Activated CD4-positive, alpha-beta T cell treated with anti-CD3 and anti-CD28 coated beads for 36 hours (primary cell): ENCODE measurements at regions of chr11 and their contacts with region 1.

Region 1: GRCh38 chr11:19712281-19713220 is at the start of gene NAV2:
- DNase-seq: peak; percentile 86
- ATAC-seq: peak; percentile 98
- H3K4me3 Mint-ChIP-seq: peak within 1 kb of the TSS; percentile 77
- H3K27ac Mint-ChIP-seq: peak within 1 kb of the TSS; percentile 85
- H3K4me1 Mint-ChIP-seq: peaks cover 26% of the 10 kb centered on the region
- H3K27me3 Mint-ChIP-seq: peaks cover 39% of the 10 kb centered on the region
- total RNA-seq, gene NAV2: 0.54 to 0.55 TPM

Region 2: DNA sequence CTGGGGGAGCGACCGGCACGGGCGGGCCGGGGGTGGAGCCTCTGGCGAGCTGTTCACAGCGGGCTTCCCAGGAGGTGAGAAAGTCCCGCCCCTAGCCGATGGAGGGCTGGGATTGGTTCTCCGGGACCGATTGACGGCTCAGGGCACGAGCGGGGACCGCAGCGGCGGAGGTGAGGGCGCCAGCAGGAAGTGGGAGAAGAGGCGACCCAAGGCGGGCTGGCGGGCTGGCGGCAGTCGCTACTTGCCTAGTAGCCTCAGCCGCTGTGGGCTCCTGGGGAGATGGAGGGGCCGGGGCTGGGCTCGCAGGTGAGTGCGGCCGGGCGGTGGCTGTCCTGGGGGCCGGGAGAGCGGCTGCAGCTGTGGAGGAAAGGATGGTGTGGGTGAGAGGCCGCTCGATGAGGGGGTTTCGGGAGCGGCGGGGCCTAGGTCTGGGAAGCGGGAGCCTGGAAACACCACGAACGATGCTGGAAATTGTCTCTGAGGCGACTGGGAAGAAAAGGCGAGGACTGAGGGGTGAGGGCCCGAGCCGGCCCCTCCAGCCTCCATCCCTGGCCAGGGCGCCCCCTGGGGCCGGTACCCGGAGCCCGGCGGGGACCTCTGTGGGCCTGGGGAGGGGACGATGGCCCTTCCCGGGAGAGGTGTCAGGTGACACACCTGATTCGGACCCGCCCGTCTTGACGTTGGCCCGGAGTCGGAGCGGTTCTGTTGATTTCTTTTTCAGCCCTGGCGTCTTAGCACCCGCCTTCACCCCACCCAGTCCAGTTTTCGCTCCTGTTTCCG is 595.4 kb before region 1 on chr11 and contains the start of gene ZDHHC13:
- CTCF ChIA-PET with region 1: no interaction called
- POLR2A ChIA-PET with region 1: no interaction called
- intact Hi-C with region 1: loop called in 1 of 2 experiments (anchors 1 kb)
- DNase-seq: peak; percentile 97
- ATAC-seq: peak; percentile 99
- H3K4me3 Mint-ChIP-seq: peak within 1 kb of the TSS; percentile 89
- H3K27ac Mint-ChIP-seq: peak within 1 kb of the TSS; percentile 87
- H3K4me1 Mint-ChIP-seq: peaks cover 51% of the 10 kb centered on the region
- H3K27me3 Mint-ChIP-seq: no peaks in the 10 kb centered on the region
- total RNA-seq, gene ZDHHC13: 22.9 to 25.9 TPM

Region 3: GRCh38 chr11:19160847-19161246 is 551.7 kb before region 1 on chr11:
- CTCF ChIA-PET with region 1: no interaction called
- POLR2A ChIA-PET with region 1: no interaction called
- intact Hi-C with region 1: no loop called
- DNase-seq: no peak
- ATAC-seq: no peak
- H3K4me3 Mint-ChIP-seq: no peak overlapping the region
- H3K27ac Mint-ChIP-seq: no peak overlapping the region
- H3K4me1 Mint-ChIP-seq: no peaks in the 10 kb centered on the region
- H3K27me3 Mint-ChIP-seq: no peaks in the 10 kb centered on the region

Region 4: DNA sequence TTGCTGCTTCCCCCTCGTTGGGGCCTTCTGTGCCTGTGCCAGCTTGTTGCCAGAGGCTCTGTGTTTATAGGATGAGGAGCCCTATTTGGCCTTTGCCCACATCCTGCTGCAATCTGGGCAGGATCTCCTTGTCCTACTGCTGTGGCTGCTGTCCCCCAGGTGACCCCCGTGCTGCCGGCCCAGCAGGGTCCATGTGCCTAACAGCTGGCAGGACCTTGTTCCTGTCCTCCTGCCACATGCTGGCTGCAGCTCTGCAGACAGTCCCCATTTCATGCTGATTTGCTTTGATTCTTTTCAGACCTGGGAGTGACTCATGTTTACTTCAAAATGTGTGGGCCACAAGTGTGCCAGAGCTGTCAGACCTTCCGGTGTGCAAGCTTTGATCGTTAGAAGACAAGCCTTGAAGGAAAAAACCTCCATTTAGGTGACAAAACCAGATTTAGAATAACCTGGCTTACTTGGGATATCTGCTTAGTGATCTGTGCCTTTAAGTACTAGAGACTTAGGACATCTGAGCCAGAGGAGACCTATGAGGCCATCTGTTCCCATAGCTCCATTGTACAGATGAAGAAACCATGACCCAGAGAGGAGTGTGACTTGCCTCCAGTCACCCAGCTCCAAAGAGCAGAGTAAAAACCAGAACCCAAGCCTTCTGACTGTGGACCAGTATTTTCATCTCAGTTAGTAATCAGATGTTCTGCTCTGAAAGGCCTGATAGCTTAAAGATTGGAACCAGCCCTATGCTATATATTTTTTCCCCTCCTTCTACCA is 11.2 kb after region 1 on chr11:
- CTCF ChIA-PET with region 1: interaction called, 3 read pairs
- POLR2A ChIA-PET with region 1: interaction called, 5 read pairs
- intact Hi-C with region 1: loop called (anchors 1 kb)
- DNase-seq: peak; percentile 66
- ATAC-seq: peak; percentile 93
- H3K4me3 Mint-ChIP-seq: no peak overlapping the region
- H3K27ac Mint-ChIP-seq: peak overlapping the region; percentile 56
- H3K4me1 Mint-ChIP-seq: peaks cover 21% of the 10 kb centered on the region
- H3K27me3 Mint-ChIP-seq: peaks cover 2% of the 10 kb centered on the region

Region 5: GRCh38 chr11:19777377-19778102 is 65.0 kb after region 1 on chr11:
- CTCF ChIA-PET with region 1: no interaction called
- POLR2A ChIA-PET with region 1: no interaction called
- intact Hi-C with region 1: loop called in 1 of 2 experiments (anchors 2 kb)
- DNase-seq: peak; percentile 30
- ATAC-seq: peak; percentile 89
- H3K4me3 Mint-ChIP-seq: peak overlapping the region; percentile 54
- H3K27ac Mint-ChIP-seq: no peak overlapping the region
- H3K4me1 Mint-ChIP-seq: peaks cover 8% of the 10 kb centered on the region
- H3K27me3 Mint-ChIP-seq: peaks cover 58% of the 10 kb centered on the region

Region 6: DNA sequence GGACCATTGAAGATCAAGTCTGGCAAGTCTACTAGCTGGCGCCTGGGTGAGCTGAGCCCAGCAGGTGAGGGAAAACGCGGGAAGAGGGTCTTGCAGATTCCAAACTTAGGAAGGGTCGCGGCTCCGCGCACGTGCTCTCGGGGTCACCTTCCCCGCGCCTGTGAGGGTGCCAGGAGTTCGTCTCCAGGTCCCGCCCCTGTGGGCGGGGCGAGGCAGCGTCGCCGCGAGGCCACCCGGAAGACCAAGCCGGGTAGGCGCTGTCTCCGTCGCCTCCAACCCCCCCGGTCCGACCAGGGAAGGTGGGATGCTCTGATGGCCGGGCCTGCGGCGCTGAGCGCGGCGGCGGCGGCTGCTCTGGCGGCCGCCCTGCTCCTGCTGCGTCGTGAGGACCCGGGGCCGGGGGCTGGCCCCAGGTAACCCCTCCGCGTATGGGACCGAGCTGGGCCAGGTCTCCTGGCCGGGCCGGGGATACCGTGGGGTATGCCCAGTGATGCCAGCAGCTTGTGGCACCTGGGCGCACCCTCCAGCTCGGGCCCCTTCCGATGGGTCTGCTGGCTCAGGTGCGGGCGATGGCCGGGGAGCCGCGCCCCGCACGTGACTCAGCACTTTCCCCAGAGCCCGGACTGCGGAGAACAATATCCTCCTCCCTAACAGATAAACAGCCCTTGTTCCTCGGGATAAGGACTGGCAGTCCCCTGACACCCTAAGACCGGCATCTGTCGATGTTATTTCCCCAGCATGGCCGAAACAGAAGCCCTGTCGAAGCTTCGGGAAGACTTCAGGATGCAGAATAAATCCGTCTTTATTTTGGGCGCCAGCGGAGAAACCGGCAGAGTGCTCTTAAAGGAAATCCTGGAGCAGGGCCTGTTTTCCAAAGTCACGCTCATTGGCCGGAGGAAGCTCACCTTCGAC is 651.2 kb after region 1 on chr11 and contains the start of gene HTATIP2:
- CTCF ChIA-PET with region 1: no interaction called
- POLR2A ChIA-PET with region 1: no interaction called
- intact Hi-C with region 1: loop called in 1 of 2 experiments (anchors 5 kb)
- DNase-seq: peak; percentile 82
- ATAC-seq: peak; percentile 79
- H3K4me3 Mint-ChIP-seq: peak within 1 kb of the TSS; percentile 76
- H3K27ac Mint-ChIP-seq: peak within 1 kb of the TSS; percentile 92
- H3K4me1 Mint-ChIP-seq: peaks cover 68% of the 10 kb centered on the region
- H3K27me3 Mint-ChIP-seq: no peaks in the 10 kb centered on the region
- total RNA-seq, gene HTATIP2: 41.4 to 60.4 TPM